CD14-positive monocyte (primary cell): ENCODE measurements at regions of chr13 and their contacts with region 1.

Region 1: GRCh38 chr13:97432917-97433726 is 847 bp upstream of the RAP2A start:
- DNase-seq: peak; percentile 99 to 100 (median 100)
- H3K4me3 ChIP-seq: peak overlapping the region; percentile 58 to 98 (median 90)
- H3K4me3 Mint-ChIP-seq: peak overlapping the region; percentile 94 to 98
- H3K27ac ChIP-seq: peak overlapping the region; percentile 89 to 99
- H3K27ac Mint-ChIP-seq: peak overlapping the region; percentile 98 to 100 (median 100)
- H3K4me1 ChIP-seq: peaks cover 16 to 30% of the 10 kb centered on the region in 2 donors
- H3K4me1 Mint-ChIP-seq: peaks cover 31% of the 10 kb centered on the region
- H3K27me3 ChIP-seq: no peaks in the 10 kb centered on the region
- H3K27me3 Mint-ChIP-seq: peaks cover 0 to 4% (median 3%) of the 10 kb centered on the region in 3 donors
- CTCF ChIP-seq: no peak

Region 2: DNA sequence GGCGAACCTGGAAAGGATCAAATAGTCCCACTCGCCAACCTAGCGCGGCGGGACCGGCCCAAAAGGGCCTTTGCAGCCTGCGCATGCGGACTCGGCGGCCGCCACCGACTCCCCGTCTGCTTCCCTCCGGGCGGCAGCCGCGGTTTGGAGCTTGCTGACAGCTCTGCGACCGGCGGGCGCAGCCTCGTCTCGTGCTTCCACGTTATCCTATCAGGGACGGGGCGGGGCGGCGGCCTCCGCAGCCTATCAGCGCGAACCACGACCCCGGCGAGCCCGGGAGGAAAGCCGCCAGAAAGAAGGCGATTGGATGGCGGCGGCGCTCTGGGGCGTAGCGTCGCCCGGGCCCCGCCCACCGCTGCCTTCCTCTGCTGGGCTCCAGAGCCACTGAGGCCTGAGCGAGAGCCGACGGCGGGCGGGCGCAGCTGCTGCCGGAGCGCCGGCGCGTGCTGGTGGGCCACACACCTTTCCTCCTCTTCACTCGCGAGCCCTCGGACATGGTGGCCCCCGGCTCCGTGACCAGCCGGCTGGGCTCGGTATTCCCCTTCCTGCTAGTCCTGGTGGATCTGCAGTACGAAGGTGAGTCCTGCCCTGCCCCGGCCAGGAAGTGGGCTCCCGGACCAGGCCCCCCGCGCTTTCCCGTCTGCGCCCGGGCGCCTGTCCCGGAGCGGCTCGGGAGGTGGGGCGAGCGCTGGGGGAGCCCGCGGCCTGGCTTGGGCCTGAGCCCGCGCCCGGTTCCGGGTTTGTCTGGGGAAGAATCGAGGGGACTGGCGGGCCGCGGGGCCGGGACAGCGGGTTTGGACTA is 1756.2 kb before region 1 on chr13 and contains the start of gene DNAJC3:
- intact Hi-C with region 1: loop called in 1 of 2 experiments (anchors 5 kb)
- DNase-seq: peak; percentile 97 to 99 (median 98)
- H3K4me3 ChIP-seq: peak within 1 kb of the TSS; percentile 83 to 96 (median 95)
- H3K4me3 Mint-ChIP-seq: peak within 1 kb of the TSS; percentile 96 to 98
- H3K27ac ChIP-seq: peak within 1 kb of the TSS; percentile 94 to 96
- H3K27ac Mint-ChIP-seq: peak within 1 kb of the TSS; percentile 92 to 100 (median 98)
- H3K4me1 ChIP-seq: peaks cover 41 to 51% of the 10 kb centered on the region in 2 donors
- H3K4me1 Mint-ChIP-seq: peaks cover 62% of the 10 kb centered on the region
- H3K27me3 ChIP-seq: no peaks in the 10 kb centered on the region
- H3K27me3 Mint-ChIP-seq: no peaks in the 10 kb centered on the region
- CTCF ChIP-seq: no peak
- polyA plus RNA-seq, gene DNAJC3: 11.1 to 27.6 (median 22.3) TPM

Region 3: DNA sequence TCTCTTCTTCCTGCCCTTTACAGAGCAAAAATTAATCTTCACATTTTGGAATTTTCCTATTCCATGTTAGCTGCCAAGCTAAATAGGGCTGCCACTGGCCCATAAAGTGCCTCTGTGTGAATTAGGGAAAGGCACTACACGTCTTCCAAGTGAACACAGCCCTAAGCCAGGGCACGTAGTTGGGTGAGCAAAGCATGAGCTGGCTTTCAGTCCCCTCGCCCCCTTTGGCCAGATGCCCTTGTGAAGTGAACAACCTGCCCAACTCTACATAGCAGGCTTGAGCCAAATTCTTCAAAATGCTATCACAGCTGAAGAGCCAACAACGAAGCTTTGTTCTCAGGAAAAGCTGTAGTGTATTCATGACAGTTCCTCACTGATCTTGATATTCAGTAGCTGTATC is 652.0 kb before region 1 on chr13:
- intact Hi-C with region 1: no loop called
- DNase-seq: no peak
- H3K4me3 ChIP-seq: no peak overlapping the region
- H3K4me3 Mint-ChIP-seq: no peak overlapping the region
- H3K27ac ChIP-seq: no peak overlapping the region
- H3K27ac Mint-ChIP-seq: no peak overlapping the region
- H3K4me1 ChIP-seq: no peaks in the 10 kb centered on the region
- H3K4me1 Mint-ChIP-seq: no peaks in the 10 kb centered on the region
- H3K27me3 ChIP-seq: no peaks in the 10 kb centered on the region
- H3K27me3 Mint-ChIP-seq: peaks cover 0 to 2% (median 0%) of the 10 kb centered on the region in 3 donors
- CTCF ChIP-seq: no peak

Region 4: GRCh38 chr13:97091196-97091595 is 341.9 kb before region 1 on chr13:
- intact Hi-C with region 1: no loop called
- DNase-seq: no peak
- H3K4me3 ChIP-seq: no peak overlapping the region
- H3K4me3 Mint-ChIP-seq: no peak overlapping the region
- H3K27ac ChIP-seq: no peak overlapping the region
- H3K27ac Mint-ChIP-seq: no peak overlapping the region
- H3K4me1 ChIP-seq: no peaks in the 10 kb centered on the region
- H3K4me1 Mint-ChIP-seq: no peaks in the 10 kb centered on the region
- H3K27me3 ChIP-seq: no peaks in the 10 kb centered on the region
- H3K27me3 Mint-ChIP-seq: peaks cover 0 to 2% (median 0%) of the 10 kb centered on the region in 3 donors
- CTCF ChIP-seq: no peak

Region 5: GRCh38 chr13:97221989-97222700 is 211.0 kb before region 1 on chr13 and contains the start of gene MBNL2:
- intact Hi-C with region 1: loop called (anchors 10 kb)
- DNase-seq: peak; percentile 81 to 91 (median 83)
- H3K4me3 ChIP-seq: peak within 1 kb of the TSS; percentile 81 to 97 (median 95)
- H3K4me3 Mint-ChIP-seq: peak within 1 kb of the TSS; percentile 77 to 97
- H3K27ac ChIP-seq: peak within 1 kb of the TSS; percentile 65 to 88
- H3K27ac Mint-ChIP-seq: peak within 1 kb of the TSS; percentile 91 to 97 (median 96)
- H3K4me1 ChIP-seq: peaks cover 40 to 49% of the 10 kb centered on the region in 2 donors
- H3K4me1 Mint-ChIP-seq: peaks cover 45% of the 10 kb centered on the region
- H3K27me3 ChIP-seq: no peaks in the 10 kb centered on the region
- H3K27me3 Mint-ChIP-seq: peaks cover 4 to 7% (median 6%) of the 10 kb centered on the region in 3 donors
- CTCF ChIP-seq: no peak
- polyA plus RNA-seq, gene MBNL2: 8.5 to 15.5 (median 13.4) TPM

Region 6: GRCh38 chr13:97344265-97345175 is 88.6 kb before region 1 on chr13:
- intact Hi-C with region 1: no loop called
- DNase-seq: peak in 1 of 3 donors; percentile 2
- H3K4me3 ChIP-seq: no peak overlapping the region
- H3K4me3 Mint-ChIP-seq: no peak overlapping the region
- H3K27ac ChIP-seq: no peak overlapping the region
- H3K27ac Mint-ChIP-seq: no peak overlapping the region
- H3K4me1 ChIP-seq: no peaks in the 10 kb centered on the region
- H3K4me1 Mint-ChIP-seq: peaks cover 6% of the 10 kb centered on the region
- H3K27me3 ChIP-seq: no peaks in the 10 kb centered on the region
- H3K27me3 Mint-ChIP-seq: no peaks in the 10 kb centered on the region
- CTCF ChIP-seq: peak; percentile 26

Region 7: GRCh38 chr13:97386801-97387484 is 46.2 kb before region 1 on chr13:
- intact Hi-C with region 1: loop called in 1 of 2 experiments (anchors 10 kb)
- DNase-seq: peak; percentile 15 to 29 (median 20)
- H3K4me3 ChIP-seq: peak overlapping the region in 2 of 3 experiments; percentile 4 to 67
- H3K4me3 Mint-ChIP-seq: peak overlapping the region; percentile 57 to 84
- H3K27ac ChIP-seq: peak overlapping the region; percentile 87 to 89
- H3K27ac Mint-ChIP-seq: peak overlapping the region; percentile 89 to 98 (median 96)
- H3K4me1 ChIP-seq: peaks cover 51 to 53% of the 10 kb centered on the region in 2 donors
- H3K4me1 Mint-ChIP-seq: peaks cover 49% of the 10 kb centered on the region
- H3K27me3 ChIP-seq: no peaks in the 10 kb centered on the region
- H3K27me3 Mint-ChIP-seq: no peaks in the 10 kb centered on the region
- CTCF ChIP-seq: no peak

Region 8: GRCh38 chr13:97975848-97976609 is 542.9 kb after region 1 on chr13:
- intact Hi-C with region 1: loop called (anchors 10 kb)
- DNase-seq: peak; percentile 74 to 93 (median 85)
- H3K4me3 ChIP-seq: peak overlapping the region; percentile 69 to 94 (median 85)
- H3K4me3 Mint-ChIP-seq: peak overlapping the region; percentile 81 to 86
- H3K27ac ChIP-seq: peak overlapping the region in 1 of 2 donors; percentile 83
- H3K27ac Mint-ChIP-seq: peak overlapping the region in 6 of 7 donors; percentile 68 to 92 (median 88)
- H3K4me1 ChIP-seq: peaks cover 15 to 21% of the 10 kb centered on the region in 2 donors
- H3K4me1 Mint-ChIP-seq: peaks cover 15% of the 10 kb centered on the region
- H3K27me3 ChIP-seq: peaks cover 0 to 4% of the 10 kb centered on the region in 2 donors
- H3K27me3 Mint-ChIP-seq: peaks cover 4 to 10% (median 4%) of the 10 kb centered on the region in 3 donors
- CTCF ChIP-seq: no peak